MCF 10A (cell line): ENCODE measurements at regions of chr2 and their contacts with region 1.

Region 1: DNA sequence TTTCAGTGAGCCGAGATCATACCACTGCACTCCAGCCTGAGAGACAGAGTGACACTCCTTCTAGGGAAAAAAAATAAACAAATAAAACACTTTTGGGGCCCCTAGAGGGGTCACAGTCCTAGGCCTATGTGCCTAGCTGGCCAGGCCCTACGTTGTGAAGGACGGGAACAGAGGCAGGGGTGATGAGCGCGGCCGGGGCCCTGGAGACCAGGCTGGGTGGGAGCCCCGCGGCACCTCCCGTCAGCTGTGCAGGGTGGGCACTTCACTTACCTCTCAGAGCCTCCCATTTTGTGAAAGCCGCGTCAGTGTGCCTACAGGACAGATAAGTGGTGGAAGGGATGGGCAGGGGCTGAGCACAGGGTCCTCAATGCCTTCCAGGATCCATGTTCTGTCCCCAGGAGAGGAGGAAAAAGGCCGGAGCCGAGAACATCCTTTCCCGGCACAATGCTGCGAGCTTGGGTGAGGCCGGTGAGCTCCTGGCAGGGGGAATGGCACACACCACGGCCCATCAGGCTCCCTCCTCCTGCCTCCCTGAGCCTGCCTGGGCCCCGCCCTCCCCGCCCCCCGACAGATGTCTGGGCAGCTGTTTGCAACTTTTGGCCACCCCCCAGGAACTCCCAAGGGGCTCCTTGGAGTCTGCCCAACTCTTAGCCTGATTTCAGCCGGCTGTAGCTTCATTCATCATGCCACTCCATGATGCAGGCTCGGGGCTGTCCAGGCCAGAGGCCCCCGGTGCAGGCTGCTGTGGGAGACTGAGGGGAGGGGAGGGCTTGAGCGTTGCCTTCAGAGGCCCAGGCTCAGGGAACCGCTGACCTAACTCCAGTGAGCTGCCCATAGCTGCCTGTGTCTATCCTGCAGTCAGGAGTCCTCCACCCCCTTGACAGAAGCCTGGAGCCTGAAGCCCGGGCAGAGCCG is 196.5 kb downstream of the TFCP2L1 start:
- DNase-seq: no peak
- H3K4me3 Mint-ChIP-seq: no peak overlapping the region
- H3K27ac Mint-ChIP-seq: no peak overlapping the region
- H3K4me1 Mint-ChIP-seq: peaks cover under 1% of the 10 kb centered on the region
- H3K27me3 Mint-ChIP-seq: no peaks in the 10 kb centered on the region
- CTCF ChIP-seq: no peak

Region 2: DNA sequence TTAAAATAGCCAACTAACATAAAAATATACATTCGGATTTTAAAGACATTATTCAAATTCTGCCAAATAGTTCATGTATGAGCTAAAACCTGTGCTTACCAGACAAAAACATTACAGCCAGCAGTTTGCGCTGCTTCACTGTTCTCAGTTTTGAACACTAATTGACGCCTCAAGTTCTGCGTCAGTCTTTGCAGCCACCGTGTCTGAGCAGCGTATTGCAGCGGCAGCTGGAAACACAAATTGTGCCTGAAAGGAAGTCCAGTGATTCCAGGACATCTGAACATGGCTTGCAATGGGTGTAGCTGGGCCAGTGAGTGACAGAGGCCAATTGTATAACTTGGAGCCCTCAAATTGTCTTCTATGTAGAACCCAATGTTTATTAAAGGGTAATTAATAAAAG is 71.1 kb before region 1 on chr2:
- CTCF ChIA-PET with region 1: no interaction called
- POLR2A ChIA-PET with region 1: no interaction called
- intact Hi-C with region 1: no loop called
- DNase-seq: no peak
- H3K4me3 Mint-ChIP-seq: no peak overlapping the region
- H3K27ac Mint-ChIP-seq: no peak overlapping the region
- H3K4me1 Mint-ChIP-seq: no peaks in the 10 kb centered on the region
- H3K27me3 Mint-ChIP-seq: peaks cover 16% of the 10 kb centered on the region
- CTCF ChIP-seq: no peak

Region 3: DNA sequence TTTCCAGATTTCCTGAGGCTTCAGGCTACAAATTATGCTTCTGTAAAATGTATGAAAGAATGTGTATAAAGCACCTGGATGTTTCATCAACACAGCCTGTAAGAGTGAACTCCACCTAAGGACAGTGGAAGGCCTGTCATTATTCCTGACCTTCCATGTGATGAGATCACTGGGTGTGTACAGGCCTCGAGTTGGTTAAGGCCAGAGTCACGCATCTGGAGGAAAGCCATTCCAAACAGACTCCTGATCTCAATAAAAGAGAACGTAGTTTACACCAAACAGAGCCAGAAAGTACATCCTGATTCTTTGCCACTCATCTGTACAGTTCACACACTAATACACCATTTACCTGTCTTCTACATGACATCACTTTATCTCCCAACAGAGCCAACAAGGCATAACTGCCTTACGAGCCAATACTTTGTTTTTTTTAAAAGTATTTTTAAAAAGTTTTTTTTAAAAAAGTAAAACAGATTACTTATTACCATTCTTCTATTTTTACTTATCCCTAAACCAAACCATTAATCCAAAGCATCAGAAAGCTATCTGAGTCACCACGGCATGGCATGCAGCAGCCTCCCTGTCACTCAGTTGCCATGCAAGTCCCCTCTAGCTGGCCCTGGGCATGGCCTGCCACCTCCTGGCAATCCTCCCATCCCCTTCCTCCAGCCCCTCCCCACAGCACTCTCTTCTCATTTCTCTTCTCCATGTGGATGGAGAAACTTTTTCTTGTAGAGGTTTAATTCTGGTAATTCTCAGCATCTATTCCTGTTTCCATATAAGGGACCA is 275.3 kb after region 1 on chr2:
- CTCF ChIA-PET with region 1: interaction called, 356 read pairs
- POLR2A ChIA-PET with region 1: interaction called, 4 read pairs
- intact Hi-C with region 1: no loop called
- DNase-seq: peak; percentile 77
- H3K4me3 Mint-ChIP-seq: peak overlapping the region; percentile 18
- H3K27ac Mint-ChIP-seq: peak overlapping the region; percentile 95
- H3K4me1 Mint-ChIP-seq: peaks cover 49% of the 10 kb centered on the region
- H3K27me3 Mint-ChIP-seq: no peaks in the 10 kb centered on the region
- CTCF ChIP-seq: no peak